Right ventricle myocardium inferior (tissue), 1 donor: ENCODE measurements at regions of chr17 and their contacts with region 1.

Region 1: GRCh38 chr17:76121932-76122430 is 18.4 kb upstream of the EXOC7 start:
- DNase-seq: no peak
- ATAC-seq: peak; percentile 47

Region 2: DNA sequence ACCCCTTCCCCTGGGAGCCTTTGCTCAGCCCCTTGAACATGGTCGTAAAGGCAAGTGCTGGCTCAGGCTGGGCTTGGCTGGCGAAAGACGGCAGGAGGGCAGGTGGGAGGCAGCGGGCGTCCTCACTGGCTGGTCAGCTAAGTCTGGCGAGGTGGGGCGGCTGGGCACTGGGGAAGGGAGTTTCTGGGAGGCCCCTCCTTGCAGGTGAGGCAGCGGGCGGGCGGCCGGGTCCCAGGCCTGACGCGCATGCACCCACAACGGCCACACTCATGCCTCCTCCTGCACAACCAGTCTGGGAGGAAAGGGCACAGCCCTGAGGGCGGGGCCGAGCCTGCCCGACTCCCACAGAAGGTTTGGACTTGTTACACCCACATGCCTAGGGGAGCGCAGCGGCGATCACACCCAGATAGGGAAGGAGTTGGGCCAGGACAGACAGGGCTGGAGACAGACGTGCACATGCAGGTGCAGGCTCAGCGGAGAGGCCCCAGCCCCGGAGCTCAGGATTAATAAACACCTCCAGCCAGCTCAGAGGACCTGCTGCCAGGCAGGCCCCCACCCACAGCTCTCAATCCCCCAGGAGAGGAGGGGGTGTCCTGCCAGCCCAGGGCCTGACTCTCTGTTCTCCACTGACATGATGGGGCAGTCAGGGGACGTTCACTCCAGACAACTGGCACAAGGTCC is 94.7 kb before region 1 on chr17 and contains the start of gene EVPL:
- intact Hi-C with region 1: no loop called
- DNase-seq: no peak
- ATAC-seq: peak; percentile 13
- total RNA-seq, gene EVPL: 0.11 TPM

Region 3: GRCh38 chr17:76038050-76038449 is 83.9 kb before region 1 on chr17:
- intact Hi-C with region 1: no loop called
- DNase-seq: no peak
- ATAC-seq: no peak

Region 4: GRCh38 chr17:76141212-76142038 is 19.4 kb after region 1 on chr17 and contains the start of gene FOXJ1:
- intact Hi-C with region 1: no loop called
- DNase-seq: peak; percentile 92
- ATAC-seq: peak; percentile 89
- total RNA-seq, gene FOXJ1: not detected

Region 5: GRCh38 chr17:76153640-76154039 is 31.7 kb after region 1 on chr17:
- intact Hi-C with region 1: no loop called
- DNase-seq: no peak
- ATAC-seq: no peak

Region 6: DNA sequence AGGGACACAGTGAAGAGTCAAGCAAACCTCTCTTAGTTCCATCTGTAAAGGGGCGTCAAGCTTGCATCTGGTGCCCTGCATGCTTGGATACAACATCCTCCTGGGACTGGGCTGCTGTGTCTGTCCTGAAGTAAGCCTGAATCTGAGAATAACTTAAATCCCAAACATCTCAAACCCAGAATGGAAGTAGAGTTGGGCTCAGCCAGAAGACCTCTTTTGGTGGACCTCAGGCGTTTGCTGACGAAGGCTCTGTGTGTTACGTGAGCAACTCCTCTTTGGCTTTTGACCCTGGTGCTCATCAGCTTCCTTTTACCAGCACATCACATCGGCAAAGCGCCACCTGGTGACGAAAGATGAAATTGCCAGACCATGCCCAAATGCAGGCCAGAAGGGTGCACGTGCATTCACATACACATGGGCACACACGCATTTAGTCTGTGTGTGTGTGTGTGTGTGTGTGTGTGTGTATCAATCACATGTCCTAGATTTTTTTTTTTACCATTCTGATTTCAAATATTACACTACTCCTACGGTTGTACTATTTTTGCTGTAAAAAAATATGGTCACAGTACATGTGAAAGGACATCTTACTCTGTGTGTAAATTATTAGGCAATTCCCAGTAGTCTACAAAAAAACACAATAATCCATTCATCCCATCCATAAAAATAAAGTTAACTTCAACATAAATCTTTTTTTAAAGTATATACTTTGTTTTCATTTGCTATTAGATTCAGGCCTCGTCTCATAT is 60.2 kb after region 1 on chr17:
- intact Hi-C with region 1: loop called (anchors 2 kb)
- DNase-seq: peak; percentile 93
- ATAC-seq: peak; percentile 87

Region 7: GRCh38 chr17:76278952-76279741 is 157.2 kb after region 1 on chr17:
- intact Hi-C with region 1: loop called (anchors 1 kb)
- DNase-seq: peak; percentile 94
- ATAC-seq: peak; percentile 84

Region 8: DNA sequence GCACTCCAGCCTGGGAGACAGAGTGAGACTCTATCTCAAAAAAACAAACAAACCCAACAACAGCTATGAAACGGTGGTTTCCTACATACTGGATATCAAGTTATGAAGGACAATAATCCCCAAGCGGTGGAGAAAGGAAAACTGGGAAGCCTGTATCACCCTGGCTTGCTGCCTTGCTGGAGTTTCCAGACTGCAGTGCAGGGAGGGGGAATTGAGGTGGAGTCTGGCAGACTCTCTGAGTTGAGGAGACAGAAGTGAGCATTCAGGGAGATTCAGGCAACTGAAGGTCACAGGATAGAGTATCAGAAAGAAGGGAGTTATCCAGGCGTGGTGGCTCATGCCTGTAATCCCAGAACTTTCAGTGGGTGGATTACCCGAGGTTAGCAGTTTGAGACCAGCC is 174.2 kb after region 1 on chr17:
- intact Hi-C with region 1: loop called (anchors 1 kb)
- DNase-seq: no peak
- ATAC-seq: peak; percentile 82